Head of caudate nucleus (tissue), 42 donors: ENCODE measurements at regions of chr4 and their contacts with region 1.

Region 1: GRCh38 chr4:112636688-112637551 is at the starts of genes LARP7 and ZGRF1:
- DNase-seq: peak; percentile 95 to 99 (median 98)

Region 2: GRCh38 chr4:112765317-112765975 is 128.5 kb after region 1 on chr4:
- intact Hi-C with region 1: loop called (anchors 5 kb)
- DNase-seq: peak in 1 of 42 donors; percentile 21

Region 3: GRCh38 chr4:112817933-112818593 is 181.1 kb after region 1 on chr4:
- intact Hi-C with region 1: loop called (anchors 2 kb)
- DNase-seq: peak; percentile 78 to 97 (median 90)

Region 4: DNA sequence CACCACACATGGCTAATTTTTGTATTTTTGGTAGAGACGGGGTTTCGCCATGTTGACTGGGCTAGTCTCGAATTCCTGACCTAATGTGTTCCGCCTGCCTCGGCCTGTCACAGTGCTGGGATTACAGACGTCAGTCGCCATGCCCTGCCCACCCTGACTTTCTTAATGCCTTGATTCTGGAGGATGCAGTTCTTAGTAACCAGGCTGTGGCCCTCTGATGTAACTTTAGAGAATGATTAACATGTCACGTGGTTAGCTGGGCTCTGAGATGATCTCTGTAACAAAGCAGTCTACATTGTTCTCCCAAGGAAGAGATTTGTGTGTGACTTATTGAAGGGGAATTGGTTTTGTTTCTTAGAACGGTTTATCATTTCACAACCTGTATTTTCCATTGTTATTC is 443.1 kb after region 1 on chr4:
- intact Hi-C with region 1: no loop called
- DNase-seq: peak in 20 of 42 donors; percentile 4 to 78 (median 32)